Activated naive CD4-positive, alpha-beta T cell treated with anti-CD3 and anti-CD28 coated beads for 36 hours (primary cell): ENCODE measurements at regions of chr11 and their contacts with region 1.

Region 1: DNA sequence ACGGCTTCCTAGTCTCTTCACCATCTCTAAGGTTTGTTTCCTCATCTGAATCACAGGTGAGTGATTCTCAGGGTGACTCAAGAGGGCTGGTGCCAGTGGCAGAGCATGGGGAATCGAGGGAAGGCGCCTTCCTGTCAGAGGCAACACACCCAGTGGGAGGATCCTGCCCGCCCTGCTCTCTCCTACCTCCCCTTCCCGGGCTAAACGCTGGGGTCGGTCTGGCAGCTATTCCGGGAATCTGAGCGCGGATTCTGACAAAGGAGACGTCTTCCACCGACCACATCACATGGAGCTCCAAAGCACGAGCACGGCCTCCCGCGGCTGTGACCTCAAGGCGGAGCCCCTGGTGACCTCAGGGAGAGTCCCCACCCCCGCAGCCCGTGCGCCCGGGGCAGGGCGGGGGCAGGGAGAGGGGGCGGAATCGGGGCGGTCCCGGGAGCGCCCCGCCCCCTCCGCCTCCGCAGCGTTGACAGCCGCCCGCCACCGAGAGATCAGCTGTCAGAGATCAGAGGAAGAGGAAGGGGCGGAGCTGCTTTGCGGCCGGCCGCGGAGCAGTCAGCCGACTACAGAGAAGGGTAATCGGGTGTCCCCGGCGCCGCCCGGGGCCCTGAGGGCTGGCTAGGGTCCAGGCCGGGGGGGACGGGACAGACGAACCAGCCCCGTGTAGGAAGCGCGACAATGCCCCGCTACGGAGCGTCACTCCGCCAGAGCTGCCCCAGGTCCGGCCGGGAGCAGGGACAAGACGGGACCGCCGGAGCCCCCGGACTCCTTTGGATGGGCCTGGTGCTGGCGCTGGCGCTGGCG is at the start of gene SMPD1:
- DNase-seq: peak; percentile 95
- H3K4me3 Mint-ChIP-seq: peak within 1 kb of the TSS; percentile 91
- H3K27ac Mint-ChIP-seq: peak within 1 kb of the TSS; percentile 98
- H3K4me1 Mint-ChIP-seq: peaks cover 46% of the 10 kb centered on the region
- H3K27me3 Mint-ChIP-seq: no peaks in the 10 kb centered on the region
- total RNA-seq, gene SMPD1: 24.5 to 27.5 TPM

Region 2: DNA sequence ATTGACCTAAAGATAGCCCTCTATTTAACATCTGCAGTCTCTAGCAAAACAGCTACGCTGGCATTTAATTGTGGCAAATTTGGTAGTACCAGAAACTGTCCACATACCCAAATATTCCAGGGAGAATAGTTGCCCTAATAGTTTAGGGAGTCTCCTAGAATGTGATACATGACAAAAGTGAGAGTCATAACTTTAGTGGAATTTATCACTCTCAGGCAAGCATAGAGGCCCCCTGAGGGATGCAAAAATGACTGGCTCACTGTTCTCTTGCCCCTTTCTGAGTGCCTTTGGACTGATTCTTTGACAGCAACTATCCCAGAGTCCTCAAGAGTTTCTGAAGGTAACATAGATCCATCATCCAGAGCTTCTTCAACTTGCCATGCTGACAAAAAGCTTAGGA is 1086.1 kb before region 1 on chr11:
- CTCF ChIA-PET with region 1: no interaction called
- intact Hi-C with region 1: no loop called
- DNase-seq: no peak
- H3K4me3 Mint-ChIP-seq: no peak overlapping the region
- H3K27ac Mint-ChIP-seq: no peak overlapping the region
- H3K4me1 Mint-ChIP-seq: no peaks in the 10 kb centered on the region
- H3K27me3 Mint-ChIP-seq: no peaks in the 10 kb centered on the region

Region 3: DNA sequence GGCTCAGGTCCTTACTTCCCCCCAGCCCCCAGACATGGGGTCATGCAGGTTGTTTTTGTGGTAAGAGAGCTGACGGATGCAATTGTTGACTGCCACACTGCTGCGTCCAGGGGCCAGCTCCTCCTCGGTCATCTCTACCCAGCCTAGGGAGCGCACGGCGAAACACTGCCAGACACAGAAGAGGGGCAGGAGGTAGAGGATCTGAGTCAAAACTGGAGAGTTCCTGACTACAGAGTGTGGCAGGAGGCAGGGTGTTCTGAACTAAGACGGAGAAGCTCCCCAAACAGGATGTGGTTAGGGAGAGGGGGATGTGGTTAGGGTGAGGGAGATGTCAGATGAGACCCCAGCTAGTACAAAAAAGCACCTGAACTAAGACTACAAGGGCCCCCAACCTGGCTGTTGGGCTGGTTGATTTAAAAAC is 12.4 kb after region 1 on chr11:
- CTCF ChIA-PET with region 1: interaction called, 24 read pairs
- intact Hi-C with region 1: loop called (anchors 1 kb)
- DNase-seq: peak; percentile 94
- H3K4me3 Mint-ChIP-seq: peak overlapping the region; percentile 64
- H3K27ac Mint-ChIP-seq: peak overlapping the region; percentile 84
- H3K4me1 Mint-ChIP-seq: peaks cover 89% of the 10 kb centered on the region
- H3K27me3 Mint-ChIP-seq: no peaks in the 10 kb centered on the region

Region 4: GRCh38 chr11:6413791-6414201 is 23.7 kb after region 1 on chr11:
- CTCF ChIA-PET with region 1: interaction called, 3 read pairs
- intact Hi-C with region 1: loop called (anchors 1 kb)
- DNase-seq: peak; percentile 93
- H3K4me3 Mint-ChIP-seq: no peak overlapping the region
- H3K27ac Mint-ChIP-seq: no peak overlapping the region
- H3K4me1 Mint-ChIP-seq: peaks cover 38% of the 10 kb centered on the region
- H3K27me3 Mint-ChIP-seq: no peaks in the 10 kb centered on the region

Region 5: DNA sequence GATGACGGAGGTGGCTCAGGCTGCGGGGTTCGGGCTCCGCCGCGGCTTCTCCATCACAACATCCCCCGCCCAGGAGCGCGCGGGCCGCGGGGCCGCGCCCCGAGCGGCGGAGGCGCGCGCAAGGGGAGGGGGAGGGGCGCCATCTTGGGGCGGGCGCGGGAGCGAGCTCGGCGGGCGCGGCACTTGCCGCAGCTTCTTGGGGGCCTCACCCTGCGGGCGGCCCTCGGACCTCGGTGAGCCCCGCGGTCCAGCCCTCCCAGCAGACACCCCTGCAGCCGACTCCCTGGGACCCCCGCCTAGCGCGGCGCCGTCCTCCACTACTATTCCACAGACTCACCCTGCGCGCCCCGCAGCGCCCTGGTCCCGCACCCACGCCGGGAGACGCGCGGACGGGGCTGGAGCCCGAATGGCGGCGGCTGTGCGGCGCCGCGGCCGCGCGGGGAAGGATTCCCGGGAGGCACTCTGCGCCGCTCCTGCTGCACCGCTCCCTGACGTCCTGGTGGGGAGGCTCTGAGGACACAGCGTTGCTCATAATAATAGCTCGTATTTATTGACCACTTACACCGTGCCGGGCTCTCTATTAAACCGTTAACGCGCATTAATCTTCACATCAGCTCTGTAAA is 29.0 kb after region 1 on chr11 and contains the start of gene APBB1:
- CTCF ChIA-PET with region 1: interaction called, 3 read pairs
- intact Hi-C with region 1: loop called (anchors 1 kb)
- DNase-seq: peak; percentile 75
- H3K4me3 Mint-ChIP-seq: peak within 1 kb of the TSS; percentile 76
- H3K27ac Mint-ChIP-seq: peak within 1 kb of the TSS; percentile 77
- H3K4me1 Mint-ChIP-seq: peaks cover 3% of the 10 kb centered on the region
- H3K27me3 Mint-ChIP-seq: no peaks in the 10 kb centered on the region
- total RNA-seq, gene APBB1: 44.5 to 45.1 TPM

Region 6: DNA sequence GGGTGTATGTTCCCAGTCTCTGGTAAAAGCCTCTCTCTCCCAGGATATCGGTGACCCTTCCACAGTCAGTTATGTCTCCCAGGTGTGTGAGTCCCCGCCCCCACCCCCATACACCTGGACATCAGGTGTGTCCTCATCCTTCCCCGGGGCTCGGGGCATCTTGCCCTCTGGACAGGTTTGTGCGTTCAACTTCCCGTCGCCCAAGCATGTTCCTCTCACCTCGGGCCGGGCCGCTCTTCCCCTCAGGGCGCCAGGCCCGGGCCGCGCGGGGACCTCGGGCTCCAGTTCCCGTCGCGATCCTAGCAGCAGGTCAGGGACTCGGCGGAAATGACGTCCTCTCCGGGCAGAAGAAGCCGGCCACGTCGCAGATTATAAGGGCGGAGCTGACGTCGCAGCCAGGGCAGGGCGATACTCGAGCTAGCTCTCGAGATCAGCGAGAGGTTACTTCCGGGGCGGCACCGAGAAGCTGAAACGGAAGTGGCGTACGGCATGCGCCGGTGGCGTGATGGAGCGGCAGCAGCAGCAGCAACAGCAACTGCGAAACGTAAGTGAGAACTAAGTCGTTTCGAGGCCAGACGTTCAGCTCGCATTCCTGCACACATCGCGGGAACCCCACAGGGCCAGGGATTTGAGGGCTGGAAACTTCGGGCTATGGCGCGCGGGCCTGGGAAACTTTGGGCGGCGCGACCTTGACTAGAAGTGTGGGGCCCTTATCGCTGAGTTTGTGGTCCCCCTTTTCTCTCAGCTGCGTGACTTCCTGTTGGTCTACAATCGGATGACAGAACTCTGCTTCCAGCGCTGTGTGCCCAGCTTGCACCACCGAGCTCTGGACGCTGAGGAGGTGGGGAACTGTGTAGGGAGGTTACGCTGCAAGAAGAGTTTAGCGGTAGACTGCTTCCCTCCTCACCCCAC is 91.1 kb after region 1 on chr11 and contains the starts of genes ARFIP2 and TIMM10B:
- CTCF ChIA-PET with region 1: no interaction called
- intact Hi-C with region 1: loop called (anchors 1 kb)
- DNase-seq: peak; percentile 99
- H3K4me3 Mint-ChIP-seq: peak within 1 kb of the TSS; percentile 94
- H3K27ac Mint-ChIP-seq: peak within 1 kb of the TSS; percentile 96
- H3K4me1 Mint-ChIP-seq: peaks cover 38% of the 10 kb centered on the region
- H3K27me3 Mint-ChIP-seq: no peaks in the 10 kb centered on the region
- total RNA-seq, gene ARFIP2: 33.5 to 37.9 TPM
- total RNA-seq, gene TIMM10B: 35.1 to 41.7 TPM

Region 7: GRCh38 chr11:6619004-6619745 is 229.1 kb after region 1 on chr11 and contains the start of gene TPP1:
- CTCF ChIA-PET with region 1: no interaction called
- intact Hi-C with region 1: loop called (anchors 1 kb)
- DNase-seq: peak; percentile 94
- H3K4me3 Mint-ChIP-seq: no peak within 1 kb of the TSS
- H3K27ac Mint-ChIP-seq: no peak within 1 kb of the TSS
- H3K4me1 Mint-ChIP-seq: peaks cover 3% of the 10 kb centered on the region
- H3K27me3 Mint-ChIP-seq: no peaks in the 10 kb centered on the region
- total RNA-seq, gene TPP1: 25.7 to 28.5 TPM

Region 8: DNA sequence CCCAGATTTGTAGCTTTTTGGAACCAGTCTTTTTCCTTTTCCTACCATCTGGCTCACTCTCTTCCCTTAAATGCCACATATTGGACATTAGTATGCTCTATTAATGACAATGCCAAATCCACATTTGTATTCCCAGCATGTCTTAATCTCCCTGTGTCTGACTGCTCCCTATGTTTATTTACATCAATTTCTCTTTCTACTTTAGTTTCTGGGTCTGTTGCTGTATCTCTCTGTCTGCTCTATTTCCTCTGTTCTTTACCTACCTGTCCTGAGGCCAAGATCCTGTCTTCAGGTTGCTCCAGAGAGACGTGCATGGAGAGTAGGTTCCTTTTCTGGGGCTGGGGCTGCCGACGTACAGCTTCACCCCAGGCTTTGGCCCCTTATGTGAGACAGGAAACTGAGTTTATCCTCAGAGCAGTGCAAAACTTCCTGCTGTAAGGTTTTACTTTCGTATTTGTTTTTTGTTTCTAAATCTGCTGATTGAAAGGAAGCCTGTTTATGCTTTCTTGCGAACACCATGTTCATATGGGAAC is 356.0 kb after region 1 on chr11:
- CTCF ChIA-PET with region 1: no interaction called
- intact Hi-C with region 1: loop called (anchors 2 kb)
- DNase-seq: peak; percentile 60
- H3K4me3 Mint-ChIP-seq: no peak overlapping the region
- H3K27ac Mint-ChIP-seq: no peak overlapping the region
- H3K4me1 Mint-ChIP-seq: peaks cover 28% of the 10 kb centered on the region
- H3K27me3 Mint-ChIP-seq: no peaks in the 10 kb centered on the region